Posterior vena cava (tissue), 2 donors: ENCODE measurements at regions of chr12 and their contacts with region 1.

Region 1: GRCh38 chr12:40382217-40382616 is 157.4 kb downstream of the LRRK2 start:
- DNase-seq: no peak

Region 2: DNA sequence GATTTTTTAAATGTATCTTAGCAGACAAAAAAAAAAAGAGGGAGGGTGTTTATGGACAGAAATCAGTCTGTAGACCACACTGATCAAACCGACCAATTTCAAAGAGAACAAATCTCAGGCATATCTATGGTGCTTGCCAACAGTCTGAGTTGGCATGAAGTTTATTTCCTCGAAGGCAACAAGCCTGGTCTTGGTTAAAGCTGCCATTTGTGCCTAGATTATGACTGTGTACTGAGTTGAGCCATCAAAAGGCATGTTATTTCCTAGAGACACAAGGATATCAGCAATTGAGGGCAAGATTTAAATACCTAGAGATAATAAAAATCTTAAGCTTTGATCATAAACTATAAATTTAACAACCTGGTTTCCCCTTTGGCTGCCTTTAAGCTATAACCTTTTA is 395.5 kb before region 1 on chr12:
- intact Hi-C with region 1: no loop called
- DNase-seq: no peak

Region 3: DNA sequence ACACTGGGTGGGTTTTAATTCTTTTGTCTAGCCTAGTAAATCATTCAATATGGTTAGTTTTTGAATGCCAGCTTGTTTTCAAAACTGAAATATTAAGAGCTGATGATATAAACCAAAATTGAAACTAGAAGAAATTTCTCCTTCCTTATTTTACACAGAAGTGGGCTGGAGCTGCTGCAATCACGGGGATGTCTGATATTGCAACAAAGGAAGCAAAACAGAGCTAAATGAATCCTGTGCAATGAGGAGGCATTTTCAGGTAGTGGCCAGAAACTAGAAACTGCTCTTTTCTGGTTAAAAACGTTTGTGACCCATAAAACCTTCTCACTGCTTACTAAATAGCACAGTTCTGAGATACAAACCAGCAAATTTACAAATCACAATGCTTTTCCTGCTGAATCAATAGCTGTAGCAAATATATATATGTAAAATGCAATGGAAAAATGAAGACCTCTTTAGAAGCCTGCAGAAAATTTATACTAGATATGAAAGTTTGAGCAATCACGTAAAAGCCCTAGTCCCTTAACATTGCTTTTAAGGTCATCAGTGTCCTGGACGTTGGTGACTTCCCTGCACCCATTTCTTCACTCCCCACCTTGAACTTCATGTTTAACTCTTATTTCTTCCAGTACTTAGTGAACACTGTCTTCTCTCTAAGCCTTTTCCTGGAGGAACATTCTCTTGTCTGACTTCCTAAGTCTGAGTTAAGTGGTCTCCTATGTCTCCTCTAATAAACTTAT is 173.3 kb before region 1 on chr12:
- intact Hi-C with region 1: no loop called
- DNase-seq: no peak

Region 4: DNA sequence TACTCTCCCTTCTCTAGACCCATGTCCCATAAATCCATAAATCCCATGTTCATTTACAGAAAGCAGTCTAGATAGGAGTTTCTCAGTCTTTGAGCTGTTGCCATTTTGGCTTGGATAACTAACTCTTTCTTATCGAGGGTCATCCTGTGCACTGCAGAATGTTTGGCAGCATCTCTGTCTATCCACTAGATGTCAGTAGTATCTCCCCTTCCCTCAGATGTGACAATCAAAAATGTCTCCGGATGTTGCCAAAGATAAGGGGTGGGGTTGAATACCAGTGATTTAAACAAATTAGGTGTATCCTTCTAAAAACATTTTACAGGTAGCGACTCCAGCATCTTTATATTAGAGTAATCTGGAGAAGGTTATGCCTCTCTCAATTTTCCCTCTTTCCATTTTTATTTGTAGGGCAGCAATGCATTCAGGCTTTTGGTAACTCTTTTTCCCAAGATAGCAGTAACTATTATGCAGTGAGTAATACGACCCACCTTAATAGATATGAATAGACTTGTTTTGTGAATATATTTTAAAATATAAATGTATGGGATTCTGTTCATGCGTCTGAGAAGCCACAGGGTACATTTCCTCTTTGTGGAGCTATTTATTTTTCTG is 56.8 kb before region 1 on chr12:
- intact Hi-C with region 1: loop called in 1 of 2 experiments (anchors 5 kb)
- DNase-seq: no peak